Sigmoid colon (tissue), 7 donors: ENCODE measurements at regions of chr5 and their contacts with region 1.

Region 1: GRCh38 chr5:148998174-148998797 is 64.6 kb downstream of the SH3TC2 start:
- DNase-seq: no peak
- H3K4me3 ChIP-seq: no peak overlapping the region
- H3K27ac ChIP-seq: no peak overlapping the region
- H3K4me1 ChIP-seq: peaks cover 0 to 25% (median 18%) of the 10 kb centered on the region in 4 donors
- H3K27me3 ChIP-seq: no peaks in the 10 kb centered on the region
- CTCF ChIP-seq: peak in 3 of 4 experiments; percentile 42 to 73 (median 64)
- EP300 ChIP-seq: no peak
- POLR2A ChIP-seq: no peak

Region 2: DNA sequence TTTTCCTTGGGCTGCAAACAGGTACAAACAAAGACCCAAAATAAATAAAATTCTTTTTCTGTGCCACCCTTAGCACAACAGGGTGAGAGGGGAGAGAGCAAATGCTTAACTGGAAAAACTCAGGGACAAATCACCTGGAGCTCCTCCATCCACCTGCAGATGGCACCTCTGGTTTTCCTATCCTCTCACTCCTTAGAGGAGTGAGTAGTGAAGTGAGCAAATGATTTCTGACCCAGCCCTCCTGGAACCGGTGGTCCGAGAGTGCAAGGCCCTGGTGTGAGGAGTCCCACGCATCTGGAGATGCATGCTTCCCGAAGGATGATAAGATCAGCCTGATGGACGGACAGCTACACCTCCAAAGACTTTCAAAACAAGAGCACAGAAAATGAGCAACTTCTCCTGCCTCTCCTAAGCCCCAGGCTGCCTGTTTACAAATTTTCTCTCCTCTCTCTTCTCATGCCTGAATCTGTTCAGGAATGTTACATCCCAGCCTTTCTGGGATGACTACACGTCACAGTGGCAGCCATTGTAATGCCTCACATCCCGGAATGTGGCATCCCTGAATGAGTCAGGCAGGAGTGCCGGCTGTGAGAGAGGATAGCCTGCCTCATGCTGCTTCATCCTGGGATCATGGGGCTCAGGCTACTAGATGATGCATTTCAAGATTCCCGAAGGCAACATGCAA is 85.4 kb before region 1 on chr5:
- intact Hi-C with region 1: loop called (anchors 5 kb)
- DNase-seq: no peak
- H3K4me3 ChIP-seq: no peak overlapping the region
- H3K27ac ChIP-seq: peak overlapping the region in 2 of 4 donors; percentile 27 to 42
- H3K4me1 ChIP-seq: peaks cover 0 to 22% (median 16%) of the 10 kb centered on the region in 4 donors
- H3K27me3 ChIP-seq: no peaks in the 10 kb centered on the region
- CTCF ChIP-seq: no peak
- EP300 ChIP-seq: no peak
- POLR2A ChIP-seq: no peak

Region 3: GRCh38 chr5:149011074-149011476 is 12.8 kb after region 1 on chr5:
- intact Hi-C with region 1: no loop called
- DNase-seq: no peak
- H3K4me3 ChIP-seq: no peak overlapping the region
- H3K27ac ChIP-seq: no peak overlapping the region
- H3K4me1 ChIP-seq: peaks cover 0 to 19% (median 12%) of the 10 kb centered on the region in 4 donors
- H3K27me3 ChIP-seq: no peaks in the 10 kb centered on the region
- CTCF ChIP-seq: no peak
- EP300 ChIP-seq: no peak
- POLR2A ChIP-seq: no peak

Region 4: DNA sequence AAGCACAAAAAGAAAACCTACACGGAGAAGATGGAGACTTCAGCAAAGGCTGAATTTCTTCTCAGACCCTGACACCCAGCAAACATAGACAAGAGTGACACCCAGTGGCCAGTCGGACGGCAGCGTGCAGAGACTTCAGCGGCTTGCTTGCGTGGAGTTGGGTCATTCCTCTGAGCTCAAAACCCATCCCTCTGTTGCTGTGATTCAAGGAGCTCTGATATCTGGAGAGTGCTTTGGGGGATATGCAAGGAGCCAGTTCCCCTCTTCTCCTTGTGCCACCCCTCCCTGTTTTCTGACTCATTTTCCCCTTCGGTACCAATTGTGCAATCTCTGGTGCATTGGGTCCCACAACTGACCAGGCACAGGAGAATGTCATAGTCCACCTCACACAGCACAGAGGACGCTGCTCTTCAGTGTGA is 37.1 kb after region 1 on chr5:
- intact Hi-C with region 1: loop called (anchors 5 kb)
- DNase-seq: peak; percentile 81
- H3K4me3 ChIP-seq: no peak overlapping the region
- H3K27ac ChIP-seq: no peak overlapping the region
- H3K4me1 ChIP-seq: no peaks in the 10 kb centered on the region
- H3K27me3 ChIP-seq: no peaks in the 10 kb centered on the region
- CTCF ChIP-seq: peak; percentile 50 to 82 (median 71)
- EP300 ChIP-seq: no peak
- POLR2A ChIP-seq: no peak

Region 5: GRCh38 chr5:149141224-149141956 is 143.1 kb after region 1 on chr5 and contains the start of gene ABLIM3:
- intact Hi-C with region 1: no loop called
- DNase-seq: peak; percentile 79
- H3K4me3 ChIP-seq: peak within 1 kb of the TSS; percentile 58 to 74 (median 62)
- H3K27ac ChIP-seq: peak within 1 kb of the TSS; percentile 57 to 83 (median 62)
- H3K4me1 ChIP-seq: peaks cover 0 to 35% (median 27%) of the 10 kb centered on the region in 4 donors
- H3K27me3 ChIP-seq: no peaks in the 10 kb centered on the region
- CTCF ChIP-seq: peak; percentile 58 to 96 (median 68)
- EP300 ChIP-seq: no peak
- POLR2A ChIP-seq: no peak
- total RNA-seq, gene ABLIM3: 6.8 to 19.9 (median 13.8) TPM